Activated CD4-positive, alpha-beta T cell treated with anti-CD3 and anti-CD28 coated beads for 36 hours (primary cell): ENCODE measurements at regions of chr10 and their contacts with region 1.

Region 1: DNA sequence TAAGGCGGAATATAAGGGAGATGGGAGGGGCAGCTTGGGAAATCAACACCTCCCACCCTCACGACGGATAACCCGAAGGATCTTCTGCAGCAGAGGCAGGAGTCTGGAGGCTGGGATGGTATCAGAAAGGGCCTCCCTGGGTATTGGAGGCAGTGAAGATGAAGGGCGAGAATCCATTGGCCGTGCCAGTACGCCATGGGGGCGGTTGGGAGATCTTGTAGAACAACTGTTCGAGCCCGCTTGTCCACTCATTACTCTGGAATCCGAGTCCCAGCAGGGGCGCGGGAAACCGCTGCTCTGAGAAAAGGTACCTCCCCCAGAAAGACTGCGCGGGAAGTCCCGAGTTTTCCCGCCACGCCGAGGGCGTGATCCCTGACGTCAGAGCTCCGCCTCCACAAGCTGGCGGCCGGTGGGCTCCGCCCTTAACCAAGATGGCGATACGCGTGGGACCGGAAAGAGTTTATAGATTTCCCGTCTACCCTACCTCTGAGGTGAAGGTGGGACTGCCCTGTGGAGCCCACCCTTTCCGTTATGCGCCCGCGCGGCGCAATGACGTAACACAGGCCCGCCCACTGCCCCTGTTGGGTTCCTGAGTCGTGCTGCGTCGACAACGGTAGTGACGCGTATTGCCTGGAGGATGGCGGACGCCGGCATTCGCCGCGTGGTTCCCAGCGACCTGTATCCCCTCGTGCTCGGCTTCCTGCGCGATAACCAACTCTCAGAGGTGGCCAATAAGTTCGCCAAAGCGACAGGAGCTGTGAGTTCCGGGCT is at the start of gene NOLC1:
- DNase-seq: peak; percentile 100
- ATAC-seq: peak; percentile 92
- H3K4me3 Mint-ChIP-seq: peak within 1 kb of the TSS; percentile 99
- H3K27ac Mint-ChIP-seq: peak within 1 kb of the TSS; percentile 99
- H3K4me1 Mint-ChIP-seq: peaks cover 49% of the 10 kb centered on the region
- H3K27me3 Mint-ChIP-seq: no peaks in the 10 kb centered on the region
- total RNA-seq, gene NOLC1: 206 to 283 TPM

Region 2: GRCh38 chr10:101818119-101818871 is 333.7 kb before region 1 on chr10 and contains the start of gene OGA:
- CTCF ChIA-PET with region 1: no interaction called
- POLR2A ChIA-PET with region 1: no interaction called
- intact Hi-C with region 1: loop called (anchors 1 kb)
- DNase-seq: peak; percentile 99
- ATAC-seq: peak; percentile 89
- H3K4me3 Mint-ChIP-seq: peak within 1 kb of the TSS; percentile 89
- H3K27ac Mint-ChIP-seq: peak within 1 kb of the TSS; percentile 83
- H3K4me1 Mint-ChIP-seq: peaks cover 40% of the 10 kb centered on the region
- H3K27me3 Mint-ChIP-seq: no peaks in the 10 kb centered on the region
- total RNA-seq, gene OGA: 113 to 124 TPM

Region 3: DNA sequence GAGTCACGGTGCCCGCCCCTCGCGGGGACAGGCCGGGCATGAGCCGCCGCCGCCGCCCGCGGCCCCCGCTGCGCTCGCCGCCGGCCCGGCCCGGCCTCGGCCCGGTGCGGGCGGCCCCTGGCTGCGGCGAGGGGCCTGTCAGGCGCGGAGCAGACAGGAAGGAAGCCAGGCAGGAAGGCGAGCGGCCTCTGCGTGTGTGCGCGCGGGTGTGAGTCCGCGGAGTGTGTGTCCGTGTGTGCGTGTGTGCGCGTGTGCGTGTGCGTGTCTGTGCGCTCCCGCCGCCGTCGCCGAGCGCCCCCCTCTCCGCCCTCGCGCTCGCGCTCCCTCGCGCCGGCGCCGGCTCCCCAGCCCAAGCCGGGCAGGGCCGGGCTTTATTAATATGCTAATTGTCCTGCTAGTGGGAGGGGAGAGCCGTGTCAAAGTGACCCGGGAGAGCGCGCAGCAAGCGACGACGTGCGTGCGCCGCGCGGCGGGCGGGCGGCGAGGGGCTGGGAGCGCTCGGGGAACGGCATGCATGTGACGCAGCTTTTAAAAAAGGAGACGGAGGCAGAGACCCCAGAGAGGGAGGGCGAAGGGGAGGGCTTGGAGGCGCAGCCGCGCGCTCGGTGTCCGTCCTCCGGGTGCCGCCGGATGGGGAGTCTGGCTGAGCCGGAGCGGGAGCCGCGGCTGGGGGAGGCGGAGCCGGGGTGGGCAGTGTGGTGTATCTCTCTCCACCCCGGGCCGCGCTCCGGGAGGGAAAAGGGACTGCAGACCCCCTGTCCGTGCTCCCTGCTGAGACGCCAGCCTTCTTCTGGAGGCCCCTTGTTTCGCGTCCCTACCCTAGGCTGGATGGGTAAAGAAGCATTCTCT is 31.6 kb before region 1 on chr10 and contains the start of gene LDB1:
- CTCF ChIA-PET with region 1: interaction called, 4 read pairs
- POLR2A ChIA-PET with region 1: interaction called, 4 read pairs
- intact Hi-C with region 1: loop called (anchors 1 kb)
- DNase-seq: peak; percentile 77
- ATAC-seq: peak; percentile 28
- H3K4me3 Mint-ChIP-seq: peak within 1 kb of the TSS; percentile 81
- H3K27ac Mint-ChIP-seq: peak within 1 kb of the TSS; percentile 97
- H3K4me1 Mint-ChIP-seq: peaks cover 51% of the 10 kb centered on the region
- H3K27me3 Mint-ChIP-seq: no peaks in the 10 kb centered on the region
- total RNA-seq, gene LDB1: 69.6 to 86.7 TPM

Region 4: DNA sequence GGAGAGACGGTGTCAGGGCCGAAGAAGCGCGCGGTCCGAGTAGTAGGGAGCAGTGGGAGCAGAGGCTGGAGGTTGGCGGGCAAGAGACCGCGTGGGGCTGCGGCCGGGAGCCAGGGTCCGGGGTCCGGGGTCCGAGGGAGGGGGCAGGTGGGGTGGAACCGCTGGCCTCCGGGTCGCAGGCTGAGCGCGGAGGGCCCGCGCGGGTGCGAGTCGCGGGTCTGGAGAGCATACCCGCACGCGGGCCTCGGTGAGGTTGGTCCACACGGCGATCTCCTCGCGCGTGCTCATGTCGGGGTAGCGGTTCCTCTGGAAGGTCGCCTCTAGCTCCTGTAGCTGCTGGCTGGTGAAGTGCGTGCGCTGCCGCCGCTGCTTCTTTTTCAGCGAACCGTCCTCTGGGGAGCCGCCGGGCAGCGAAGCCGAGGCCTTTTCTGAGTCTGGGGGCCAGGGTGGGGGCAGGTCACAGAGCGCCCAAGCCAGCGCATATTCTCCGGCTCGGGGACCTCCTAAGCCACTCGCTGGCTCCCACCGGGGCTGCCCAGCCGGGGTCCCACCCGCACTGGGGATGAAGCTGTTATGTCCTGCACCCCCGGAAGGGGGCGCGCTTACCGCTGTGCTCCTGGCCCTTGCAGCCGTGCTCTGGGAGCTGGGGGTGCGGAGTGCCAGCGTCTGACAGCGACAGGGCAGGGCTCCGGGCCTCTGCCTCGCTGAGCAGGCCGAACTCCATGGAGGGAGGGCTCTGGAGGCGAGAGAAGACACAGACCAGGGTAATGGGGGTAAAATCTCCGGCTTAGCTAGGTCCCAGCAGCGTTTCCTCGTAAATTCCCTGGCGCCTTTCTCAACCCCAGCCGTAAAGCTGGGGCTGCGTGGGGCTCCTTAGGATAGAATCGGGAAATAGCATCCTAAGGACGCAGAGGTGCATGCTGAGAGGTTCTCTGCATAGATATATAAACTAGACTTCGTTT is 79.7 kb after region 1 on chr10:
- CTCF ChIA-PET with region 1: interaction called, 3 read pairs
- POLR2A ChIA-PET with region 1: no interaction called
- intact Hi-C with region 1: loop called in 1 of 2 experiments (anchors 1 kb)
- DNase-seq: peak; percentile 89
- ATAC-seq: peak; percentile 78
- H3K4me3 Mint-ChIP-seq: peak overlapping the region; percentile 63
- H3K27ac Mint-ChIP-seq: no peak overlapping the region
- H3K4me1 Mint-ChIP-seq: peaks cover 17% of the 10 kb centered on the region
- H3K27me3 Mint-ChIP-seq: peaks cover 43% of the 10 kb centered on the region

Region 5: DNA sequence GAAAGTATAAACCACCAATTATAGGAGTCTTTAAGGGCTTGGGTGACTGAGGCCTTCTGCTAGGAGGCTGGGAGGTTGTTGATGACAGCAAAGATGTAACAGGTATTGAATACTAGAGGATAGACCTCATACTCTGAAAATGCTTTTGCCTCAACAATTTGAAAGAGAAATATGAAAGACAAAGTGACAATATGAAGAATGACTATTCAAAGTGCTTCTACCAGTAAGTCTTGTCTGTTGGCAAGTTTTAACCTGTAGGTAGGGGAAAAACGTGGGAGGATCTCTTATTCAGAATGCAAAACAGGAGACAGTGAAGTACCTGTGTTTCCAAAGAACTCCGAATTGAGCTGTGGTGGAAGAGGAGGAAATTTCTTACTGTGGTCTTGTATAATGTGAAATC is 131.5 kb after region 1 on chr10:
- CTCF ChIA-PET with region 1: no interaction called
- POLR2A ChIA-PET with region 1: no interaction called
- intact Hi-C with region 1: no loop called
- DNase-seq: no peak
- ATAC-seq: peak; percentile 71
- H3K4me3 Mint-ChIP-seq: peak overlapping the region; percentile 20
- H3K27ac Mint-ChIP-seq: peak overlapping the region; percentile 85
- H3K4me1 Mint-ChIP-seq: peaks cover 83% of the 10 kb centered on the region
- H3K27me3 Mint-ChIP-seq: no peaks in the 10 kb centered on the region

Region 6: DNA sequence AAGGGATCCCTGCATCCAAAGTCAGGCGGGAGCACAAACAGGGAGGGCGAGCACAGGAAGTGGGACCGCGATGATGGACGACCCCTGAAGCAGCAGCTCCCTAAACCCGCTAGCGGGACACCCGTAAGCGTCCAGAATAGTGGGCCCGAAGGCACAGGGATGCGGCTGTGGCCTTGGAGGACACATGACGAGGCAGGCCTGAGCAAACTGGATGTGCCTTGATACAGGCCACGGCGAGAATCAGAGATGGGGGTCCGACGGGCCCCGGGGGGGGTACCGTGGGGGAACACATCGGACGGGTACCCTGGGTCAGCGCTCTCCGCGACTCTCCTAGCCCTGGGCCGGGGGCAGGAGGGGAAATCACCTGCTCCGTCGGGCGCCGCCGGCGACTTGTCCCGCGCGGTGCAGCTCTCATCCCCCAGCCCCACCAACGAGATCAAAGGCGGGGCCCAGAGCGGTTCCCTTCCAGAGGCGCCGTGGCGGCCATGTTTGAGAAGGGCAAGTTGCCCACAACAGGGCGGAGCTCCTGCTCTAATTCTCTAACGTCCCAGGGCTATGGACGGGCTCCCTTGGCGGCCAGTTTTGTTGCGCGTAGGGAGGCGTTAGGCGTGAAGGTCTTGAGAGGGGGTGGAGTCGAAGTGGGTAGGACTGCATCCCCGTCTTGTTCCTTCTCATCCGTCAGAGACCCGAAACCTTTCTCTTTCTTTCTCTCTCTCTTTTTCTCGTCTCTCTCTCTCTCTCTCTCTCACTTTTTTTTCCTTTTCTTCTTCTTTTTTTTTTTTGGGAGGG is 280.4 kb after region 1 on chr10 and contains the start of gene CUEDC2:
- CTCF ChIA-PET with region 1: no interaction called
- POLR2A ChIA-PET with region 1: no interaction called
- intact Hi-C with region 1: loop called in 1 of 2 experiments (anchors 1 kb)
- DNase-seq: peak; percentile 99
- ATAC-seq: peak; percentile 94
- H3K4me3 Mint-ChIP-seq: peak within 1 kb of the TSS; percentile 85
- H3K27ac Mint-ChIP-seq: peak within 1 kb of the TSS; percentile 94
- H3K4me1 Mint-ChIP-seq: peaks cover 42% of the 10 kb centered on the region
- H3K27me3 Mint-ChIP-seq: no peaks in the 10 kb centered on the region
- total RNA-seq, gene CUEDC2: 60.8 to 72.7 TPM

Region 7: DNA sequence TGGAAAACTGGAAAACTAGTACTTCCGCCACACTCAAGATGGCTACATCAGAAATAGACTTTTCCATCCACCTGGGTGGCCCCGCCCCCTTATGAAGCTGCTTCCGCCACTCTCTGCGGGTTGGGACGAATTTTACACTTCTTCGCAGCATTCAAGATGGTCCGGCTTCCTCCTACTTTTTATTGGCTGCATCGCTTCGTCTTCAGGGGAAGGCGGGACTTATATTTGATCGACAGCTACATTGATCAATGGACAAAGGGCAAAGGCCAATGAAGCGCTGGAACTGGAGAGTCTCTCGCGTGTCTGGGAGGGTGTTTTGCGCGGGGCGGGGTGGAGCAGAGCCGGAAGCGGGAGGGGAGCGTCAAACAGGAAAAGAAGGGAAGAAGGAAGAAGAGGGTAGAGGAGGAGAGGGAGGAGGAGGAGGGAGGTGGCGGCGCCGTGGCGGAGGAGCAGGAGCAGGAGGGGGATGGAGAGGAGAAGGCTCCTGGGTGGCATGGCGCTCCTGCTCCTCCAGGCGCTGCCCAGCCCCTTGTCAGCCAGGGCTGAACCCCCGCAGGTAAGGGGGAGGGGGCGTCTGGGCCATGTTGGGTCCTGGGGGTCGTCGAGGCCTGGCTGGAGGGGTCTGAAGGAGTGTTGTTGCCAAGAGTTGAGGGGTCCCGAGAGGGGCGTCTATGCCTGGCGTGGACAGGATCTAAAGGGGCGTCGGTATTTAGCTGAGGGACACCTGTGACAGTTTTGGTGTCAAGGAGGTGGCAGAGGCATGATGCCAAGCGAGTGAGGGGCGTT is 591.8 kb after region 1 on chr10 and contains the start of gene WBP1L:
- CTCF ChIA-PET with region 1: no interaction called
- POLR2A ChIA-PET with region 1: no interaction called
- intact Hi-C with region 1: loop called in 1 of 2 experiments (anchors 1 kb)
- DNase-seq: peak; percentile 96
- ATAC-seq: peak; percentile 98
- H3K4me3 Mint-ChIP-seq: peak within 1 kb of the TSS; percentile 92
- H3K27ac Mint-ChIP-seq: peak within 1 kb of the TSS; percentile 82
- H3K4me1 Mint-ChIP-seq: peaks cover 42% of the 10 kb centered on the region
- H3K27me3 Mint-ChIP-seq: no peaks in the 10 kb centered on the region
- total RNA-seq, gene WBP1L: 14.9 to 16.4 TPM